Endothelial cell of umbilical vein (primary cell): ENCODE measurements at regions of chr10 and their contacts with region 1.

Region 1: DNA sequence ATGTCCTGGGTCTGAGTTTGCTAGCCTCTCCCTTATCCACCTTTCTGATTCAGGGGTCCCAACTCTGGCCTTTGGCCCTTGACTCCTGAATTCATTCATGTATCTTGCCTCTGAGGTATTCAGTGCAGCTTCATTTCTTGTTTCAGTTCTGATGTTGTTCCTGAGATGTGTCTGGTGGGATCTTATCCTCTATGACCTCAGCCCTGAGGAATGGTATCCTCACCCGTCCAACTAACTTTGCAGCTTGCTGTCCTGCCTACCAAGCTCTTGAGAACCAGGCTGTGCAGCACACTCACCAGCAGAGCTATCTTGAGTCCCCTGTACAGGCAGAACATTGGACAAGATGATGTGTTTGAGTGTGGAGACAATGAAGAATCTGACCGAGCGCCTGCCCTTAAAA is 13.8 kb downstream of the SUFU start:
- DNase-seq: no peak
- H3K4me3 ChIP-seq: no peak overlapping the region
- H3K27ac ChIP-seq: no peak overlapping the region
- H3K4me1 ChIP-seq: no peaks in the 10 kb centered on the region
- H3K27me3 ChIP-seq: no peaks in the 10 kb centered on the region
- CTCF ChIP-seq: no peak
- POLR2A ChIP-seq: no peak

Region 2: DNA sequence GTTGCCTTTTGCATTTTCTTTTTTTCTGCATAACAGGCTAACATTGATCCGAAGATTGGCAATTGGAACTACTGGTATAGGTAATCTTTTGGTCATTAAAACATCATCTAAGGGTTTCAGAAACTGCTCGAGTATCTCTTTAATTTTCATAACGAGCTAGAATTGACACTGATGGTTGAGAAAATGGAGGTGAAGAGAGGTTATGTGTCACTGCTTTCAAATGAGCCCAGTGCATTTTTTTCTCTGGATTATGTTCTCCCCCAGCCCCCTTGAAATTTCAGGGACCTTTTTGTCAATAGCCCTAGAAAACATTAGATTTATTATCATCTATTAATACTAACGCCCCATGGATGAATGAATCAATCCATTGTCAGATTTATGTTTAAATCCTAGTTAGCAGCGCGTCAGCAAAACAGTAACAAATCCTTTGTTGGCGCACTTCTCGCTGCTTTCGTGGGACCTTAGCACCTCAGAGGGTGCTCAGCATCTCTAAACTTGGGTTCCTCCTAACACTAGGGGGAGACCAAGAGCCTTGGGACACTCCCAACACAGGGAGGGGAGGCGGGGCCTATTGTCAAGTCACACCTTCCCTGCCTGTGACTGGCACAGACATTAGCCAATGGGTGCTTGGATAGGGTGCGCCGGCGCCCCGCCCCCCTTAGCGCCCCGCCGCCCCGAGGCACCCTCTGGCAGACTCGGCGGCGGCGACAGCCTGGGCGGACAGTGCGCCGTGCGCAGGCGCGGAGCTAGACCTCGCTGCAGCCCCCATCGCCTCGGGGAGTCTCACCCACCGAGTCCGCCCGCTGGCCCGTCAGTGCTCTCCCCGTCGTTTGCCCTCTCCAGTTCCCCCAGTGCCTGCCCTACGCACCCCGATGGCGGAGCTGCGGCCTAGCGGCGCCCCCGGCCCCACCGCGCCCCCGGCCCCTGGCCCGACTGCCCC is 14.0 kb before region 1 on chr10 and contains the start of gene SUFU:
- CTCF ChIA-PET with region 1: interaction called, 12 read pairs
- POLR2A ChIA-PET with region 1: no interaction called
- dilution Hi-C with region 1: no loop called
- intact Hi-C with region 1: no loop called
- DNase-seq: peak; percentile 99
- H3K4me3 ChIP-seq: peak within 1 kb of the TSS; percentile 68 to 87 (median 76)
- H3K27ac ChIP-seq: peak within 1 kb of the TSS; percentile 52
- H3K4me1 ChIP-seq: peaks cover 16% of the 10 kb centered on the region
- H3K27me3 ChIP-seq: no peaks in the 10 kb centered on the region
- CTCF ChIP-seq: peak; percentile 89 to 91
- POLR2A ChIP-seq: peak; percentile 86
- total RNA-seq, gene SUFU: 14.5 and 16.3 TPM in 2 replicates